ENCODE measurements at regions of chr3 and their contacts with region 1.

Region 1: DNA sequence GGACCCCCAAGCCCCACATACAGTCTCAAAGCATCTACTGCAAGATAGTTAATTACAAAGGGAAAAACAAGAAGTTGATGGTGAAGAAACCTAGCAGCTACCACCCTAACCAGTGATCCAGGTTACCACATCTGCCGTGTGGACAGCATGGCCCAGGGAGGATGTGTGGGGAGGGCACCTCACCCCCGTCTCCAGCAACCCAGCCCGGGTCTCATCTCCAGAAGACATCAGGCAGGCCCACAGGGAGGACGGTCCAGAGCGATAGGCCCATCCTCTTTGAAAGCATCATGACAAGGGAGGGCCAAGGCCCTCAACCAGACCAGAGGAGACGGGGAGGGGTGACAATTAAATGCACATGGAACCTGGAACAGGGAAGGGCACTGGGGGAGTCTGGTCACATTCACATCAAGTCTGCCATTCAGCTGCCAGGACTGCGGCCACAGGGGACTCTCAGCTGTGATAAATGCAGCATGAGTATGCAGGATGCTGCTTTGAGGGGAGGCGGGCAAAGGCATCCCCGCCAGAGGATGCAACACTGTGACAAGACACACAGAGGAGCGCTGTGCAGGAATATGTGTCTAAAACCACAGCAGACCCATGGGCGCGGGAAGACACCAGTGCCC is 18.8 kb downstream of the ZXDC start:
- DNase-seq: no peak
- H3K4me3 ChIP-seq: no peak overlapping the region
- H3K27ac ChIP-seq: no peak overlapping the region
- H3K4me1 ChIP-seq: no peaks in the 10 kb centered on the region
- H3K27me3 ChIP-seq: no peaks in the 10 kb centered on the region
- CTCF ChIP-seq: no peak
- POLR2A ChIP-seq: no peak

Region 2: DNA sequence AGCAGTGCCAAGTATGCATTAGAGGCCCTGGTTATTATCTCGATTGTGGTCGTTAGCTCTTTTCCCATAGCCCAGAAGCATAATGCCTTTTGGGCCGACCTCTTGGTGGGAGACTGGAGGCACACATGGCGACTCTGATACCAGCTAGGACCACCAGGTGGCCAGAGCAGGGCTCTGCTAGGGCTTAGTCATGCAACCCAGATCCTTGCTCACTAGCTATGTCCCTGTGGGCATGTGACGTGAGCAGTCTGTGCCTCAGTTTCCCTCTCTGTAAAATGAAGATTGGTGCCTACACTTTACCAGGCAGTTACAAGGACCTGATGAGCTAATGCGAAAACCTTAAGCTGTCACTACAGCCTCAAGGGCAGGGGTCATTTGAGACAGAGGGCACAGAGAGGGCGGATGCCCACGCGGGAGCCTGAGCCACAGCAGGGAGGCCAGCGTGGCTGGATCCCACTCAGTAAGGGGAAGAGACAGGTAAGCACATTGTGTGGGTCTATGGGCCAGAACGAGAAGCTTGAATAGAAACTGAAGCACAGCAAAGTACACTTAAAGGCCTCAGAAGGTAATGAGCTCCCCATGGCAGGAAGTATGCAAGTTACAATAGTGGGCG is 108.5 kb before region 1 on chr3:
- intact Hi-C with region 1: no loop called
- DNase-seq: no peak
- H3K4me3 ChIP-seq: no peak overlapping the region
- H3K27ac ChIP-seq: no peak overlapping the region
- H3K4me1 ChIP-seq: no peaks in the 10 kb centered on the region
- H3K27me3 ChIP-seq: no peaks in the 10 kb centered on the region
- CTCF ChIP-seq: no peak
- POLR2A ChIP-seq: no peak

Region 3: DNA sequence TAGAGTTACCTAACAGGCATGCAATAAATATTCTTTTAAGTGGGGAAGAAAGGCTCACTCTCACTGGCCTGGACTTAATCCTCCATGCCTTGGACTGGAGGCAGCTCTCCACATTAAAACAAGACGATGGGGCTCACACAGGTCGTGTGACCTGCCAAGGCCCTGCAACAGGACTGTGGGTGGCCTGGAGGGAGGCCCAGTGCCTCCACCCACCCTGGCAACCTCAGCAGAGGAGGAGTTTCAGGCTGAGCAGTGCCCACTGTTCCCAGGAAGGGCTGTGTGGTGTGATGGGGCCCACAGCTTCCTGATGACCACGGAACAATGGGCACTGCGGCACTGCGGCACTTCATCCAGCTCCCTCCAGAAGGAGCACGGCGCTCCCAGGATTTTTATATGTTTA is 55.1 kb after region 1 on chr3:
- intact Hi-C with region 1: loop called (anchors 2 kb)
- DNase-seq: no peak
- H3K4me3 ChIP-seq: no peak overlapping the region
- H3K27ac ChIP-seq: no peak overlapping the region
- H3K4me1 ChIP-seq: no peaks in the 10 kb centered on the region
- H3K27me3 ChIP-seq: no peaks in the 10 kb centered on the region
- CTCF ChIP-seq: no peak
- POLR2A ChIP-seq: no peak

Region 4: GRCh38 chr3:126522363-126522788 is 65.5 kb after region 1 on chr3:
- intact Hi-C with region 1: loop called (anchors 2 kb)
- DNase-seq: peak; percentile 34 to 63
- H3K4me3 ChIP-seq: no peak overlapping the region
- H3K27ac ChIP-seq: no peak overlapping the region
- H3K4me1 ChIP-seq: peaks cover 0 to 4% of the 10 kb centered on the region in 2 donors
- H3K27me3 ChIP-seq: peaks cover 3 to 22% of the 10 kb centered on the region in 2 donors
- CTCF ChIP-seq: peak; percentile 78 to 87 (median 81)
- POLR2A ChIP-seq: no peak